AG04449 (cell line): ENCODE measurements at regions of chr3 and their contacts with region 1.

Region 1: GRCh38 chr3:128736601-128737000 is 10.6 kb downstream of the RAB7A start:
- DNase-seq: no peak
- H3K4me3 ChIP-seq: no peak overlapping the region
- CTCF ChIP-seq: no peak

Region 2: DNA sequence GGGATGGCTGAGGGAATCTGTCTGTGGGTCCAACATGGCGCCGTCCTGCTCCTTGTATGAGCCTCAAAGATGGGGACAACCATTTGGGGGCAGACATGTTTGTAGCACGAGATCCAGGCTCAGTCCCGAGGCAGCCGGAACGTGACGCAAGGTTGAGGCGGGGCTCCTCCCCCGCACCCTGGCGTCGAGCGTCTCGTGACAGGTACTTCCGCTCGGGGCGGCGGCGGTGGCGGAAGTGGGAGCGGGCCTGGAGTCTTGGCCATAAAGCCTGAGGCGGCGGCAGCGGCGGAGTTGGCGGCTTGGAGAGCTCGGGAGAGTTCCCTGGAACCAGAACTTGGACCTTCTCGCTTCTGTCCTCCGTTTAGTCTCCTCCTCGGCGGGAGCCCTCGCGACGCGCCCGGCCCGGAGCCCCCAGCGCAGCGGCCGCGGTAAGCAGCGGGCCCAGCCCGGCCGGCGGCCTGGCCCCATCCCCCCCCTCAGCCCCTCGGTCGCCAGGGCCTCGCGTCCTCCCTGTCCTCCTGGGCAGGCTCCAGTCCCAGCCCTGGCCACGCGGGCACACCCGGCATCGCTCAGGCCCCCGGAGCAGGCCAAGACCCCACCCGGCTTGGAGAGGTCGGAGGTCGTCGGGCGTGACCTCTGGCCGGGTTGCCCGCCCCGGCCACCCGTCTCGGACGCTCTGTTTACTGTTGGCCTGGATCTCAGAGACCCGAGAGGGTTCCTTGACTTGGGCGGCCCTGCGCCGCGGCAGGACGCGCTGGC is 10.5 kb before region 1 on chr3 and contains the start of gene RAB7A:
- CTCF ChIA-PET with region 1: interaction called, 10 read pairs
- POLR2A ChIA-PET with region 1: no interaction called
- DNase-seq: peak; percentile 89
- H3K4me3 ChIP-seq: peak within 1 kb of the TSS; percentile 95
- CTCF ChIP-seq: peak; percentile 9